AG04450 (cell line): ENCODE measurements at regions of chr7 and their contacts with region 1.

Region 1: DNA sequence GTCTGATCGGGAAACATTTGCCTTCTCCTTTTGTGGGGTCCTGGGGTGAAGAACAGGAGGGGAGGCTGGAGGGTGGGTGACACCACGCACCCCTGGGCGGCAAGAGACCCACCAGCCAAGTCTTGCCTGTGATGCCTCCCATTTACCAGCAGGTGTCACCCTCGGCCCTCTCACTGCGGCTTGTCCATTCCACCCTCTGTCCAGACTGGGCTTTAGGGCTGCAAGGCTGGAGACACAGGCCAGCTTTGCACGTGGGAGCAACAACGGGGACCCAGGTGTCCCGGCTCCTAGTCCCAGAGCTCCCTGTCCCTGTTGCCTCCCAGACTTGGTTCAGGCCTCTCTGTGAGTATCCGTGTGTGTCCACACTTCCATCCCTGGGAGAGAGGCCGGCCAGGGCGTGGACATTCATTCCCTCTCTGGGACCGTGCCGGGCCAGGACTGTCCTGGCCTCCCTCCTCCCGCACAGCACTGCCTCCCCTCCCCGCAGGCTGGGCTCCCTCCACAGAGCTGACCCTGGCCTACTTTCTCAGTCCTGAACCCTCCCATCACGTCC is 36.2 kb upstream of the GTF2IRD1 start:
- DNase-seq: no peak
- H3K4me3 ChIP-seq: no peak overlapping the region
- H3K27ac ChIP-seq: no peak overlapping the region
- H3K27me3 ChIP-seq: no peaks in the 10 kb centered on the region
- CTCF ChIP-seq: peak; percentile 98

Region 2: DNA sequence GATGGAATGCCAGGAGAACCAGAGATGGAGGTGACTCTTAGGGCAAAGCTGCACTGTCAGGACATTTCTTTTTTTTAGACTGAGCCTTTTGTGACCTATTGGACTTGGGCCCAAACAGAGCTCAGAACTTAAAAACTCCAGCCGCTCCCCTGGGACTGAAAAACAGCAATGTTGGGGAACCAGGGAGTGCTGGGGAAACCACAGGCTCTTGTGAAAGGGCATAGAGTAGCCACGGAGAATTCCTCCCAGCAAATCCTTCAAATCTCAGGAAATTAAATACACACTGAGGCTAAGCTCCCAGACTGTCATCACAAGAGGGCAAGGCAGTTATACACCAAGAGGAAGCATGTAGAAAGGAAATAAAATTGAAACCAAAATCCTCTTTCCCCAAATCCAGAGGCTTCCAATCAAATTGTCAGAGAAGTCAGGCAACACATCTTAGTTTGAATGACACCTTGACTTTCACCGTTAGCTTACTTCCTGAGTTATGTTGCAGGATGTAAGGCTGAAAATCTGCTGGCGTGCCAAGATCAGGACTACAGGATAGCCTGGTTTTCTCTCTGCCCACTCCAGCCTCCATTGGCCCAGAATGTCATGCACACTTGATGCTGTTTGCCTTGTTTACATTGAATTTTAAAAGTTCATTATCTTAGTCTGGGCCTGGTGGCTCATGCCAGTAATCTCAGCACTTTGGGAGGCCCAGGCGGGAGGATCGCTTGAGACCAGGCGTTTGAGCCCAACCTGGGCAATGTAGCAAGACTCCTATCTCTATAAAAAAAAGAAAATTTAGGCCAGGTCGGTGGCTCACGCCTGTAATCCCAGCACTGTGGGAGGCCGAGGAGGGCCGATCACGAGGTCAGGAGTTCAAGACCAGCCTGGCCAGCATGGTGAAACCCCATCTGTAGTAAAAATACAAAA is 160.7 kb before region 1 on chr7:
- CTCF ChIA-PET with region 1: no interaction called
- POLR2A ChIA-PET with region 1: no interaction called
- DNase-seq: no peak
- H3K4me3 ChIP-seq: no peak overlapping the region
- H3K27ac ChIP-seq: peak overlapping the region; percentile 21
- H3K27me3 ChIP-seq: no peaks in the 10 kb centered on the region
- CTCF ChIP-seq: no peak

Region 3: DNA sequence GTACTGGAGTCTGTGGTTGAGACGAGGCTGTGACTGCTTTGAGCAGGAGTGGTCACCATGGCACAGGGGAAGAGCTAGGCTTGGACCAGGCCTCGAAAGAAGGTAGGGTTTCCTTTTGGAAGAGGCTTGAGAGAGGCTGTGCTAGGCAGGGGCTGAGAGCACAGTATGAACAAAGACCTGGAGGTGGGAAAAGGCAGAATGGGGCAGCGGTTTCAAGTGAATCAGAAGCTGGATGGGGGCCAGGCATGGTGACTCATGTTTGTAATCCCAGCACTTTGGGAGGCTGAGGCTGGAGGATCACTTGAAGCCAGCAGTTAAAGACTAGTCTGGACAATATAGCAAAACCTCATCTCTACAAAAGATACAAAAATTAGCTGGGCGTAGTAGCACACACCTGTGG is 62.4 kb before region 1 on chr7:
- CTCF ChIA-PET with region 1: no interaction called
- POLR2A ChIA-PET with region 1: no interaction called
- DNase-seq: peak; percentile 49
- H3K4me3 ChIP-seq: no peak overlapping the region
- H3K27ac ChIP-seq: peak overlapping the region; percentile 21
- H3K27me3 ChIP-seq: no peaks in the 10 kb centered on the region
- CTCF ChIP-seq: no peak

Region 4: GRCh38 chr7:74376256-74377036 is 41.0 kb before region 1 on chr7:
- CTCF ChIA-PET with region 1: no interaction called
- POLR2A ChIA-PET with region 1: no interaction called
- DNase-seq: no peak
- H3K4me3 ChIP-seq: no peak overlapping the region
- H3K27ac ChIP-seq: no peak overlapping the region
- H3K27me3 ChIP-seq: no peaks in the 10 kb centered on the region
- CTCF ChIP-seq: no peak

Region 5: DNA sequence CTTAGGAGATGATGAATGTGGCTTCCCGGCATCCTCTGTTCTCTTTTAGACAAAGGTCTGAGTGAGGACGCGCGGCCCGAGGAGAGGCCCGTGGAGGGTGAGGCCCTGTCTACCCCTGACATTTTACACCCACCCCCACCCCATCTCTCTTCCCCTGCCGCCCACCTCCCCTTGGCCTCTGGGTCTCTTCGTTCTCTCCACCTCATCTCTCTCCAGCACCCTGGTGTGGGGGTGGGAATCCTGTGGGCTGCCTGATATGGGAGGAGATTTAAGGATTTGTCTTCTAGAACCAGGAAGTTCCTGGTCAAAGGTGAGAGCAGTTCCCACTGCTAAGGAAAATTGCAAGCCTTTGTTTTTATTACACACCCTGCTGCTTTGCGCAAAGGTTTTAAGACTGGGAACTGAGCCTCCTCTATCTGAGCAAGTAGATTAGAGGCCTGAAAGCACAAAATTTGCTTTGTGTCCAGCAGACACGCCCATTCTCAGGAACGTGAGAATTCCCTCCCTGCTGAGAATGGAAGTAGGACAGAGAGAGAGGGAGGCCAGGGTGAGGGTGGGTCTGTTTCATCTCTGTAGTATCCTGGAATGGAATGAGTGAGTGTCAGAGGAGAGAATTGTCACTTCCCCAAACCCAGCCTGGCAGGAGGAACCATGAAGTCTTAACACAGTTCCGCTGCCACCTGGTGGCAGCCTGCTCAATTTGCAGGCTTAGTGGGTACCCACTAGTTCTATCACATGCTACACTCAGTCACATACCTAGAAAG is 127.4 kb after region 1 on chr7:
- CTCF ChIA-PET with region 1: interaction called, 14 read pairs
- POLR2A ChIA-PET with region 1: no interaction called
- DNase-seq: peak; percentile 18
- H3K4me3 ChIP-seq: no peak overlapping the region
- H3K27ac ChIP-seq: peak overlapping the region; percentile 31
- H3K27me3 ChIP-seq: no peaks in the 10 kb centered on the region
- CTCF ChIP-seq: peak; percentile 58

Region 6: DNA sequence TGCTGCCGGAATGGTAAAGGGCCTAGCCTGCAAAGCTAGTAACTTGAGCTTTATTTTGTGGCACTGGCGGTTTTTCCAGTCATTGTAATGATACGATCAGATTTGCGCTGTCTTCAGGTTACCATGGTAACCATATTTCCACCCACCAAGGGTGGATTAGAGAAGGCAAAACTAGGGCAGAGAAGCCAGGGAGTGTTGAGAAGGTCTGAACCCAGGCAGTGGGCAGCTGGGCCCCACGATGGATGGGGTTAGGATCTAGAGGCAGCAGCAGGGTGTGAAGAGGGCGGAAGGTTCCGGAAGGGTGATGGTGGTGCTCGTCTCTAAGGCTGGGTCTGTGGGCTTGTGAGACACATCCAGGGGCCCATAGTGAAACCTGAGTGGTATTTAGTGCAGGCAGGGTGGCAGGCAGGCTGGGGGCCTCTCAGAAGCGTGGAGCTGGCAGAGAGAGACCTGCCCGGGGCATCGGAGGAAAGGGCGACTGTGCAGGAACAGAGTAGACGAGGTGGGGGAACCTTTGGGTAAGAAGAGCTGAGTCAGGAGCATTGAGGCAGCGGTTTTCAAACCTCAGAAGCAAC is 152.1 kb after region 1 on chr7:
- CTCF ChIA-PET with region 1: interaction called, 28 read pairs
- POLR2A ChIA-PET with region 1: no interaction called
- DNase-seq: no peak
- H3K4me3 ChIP-seq: no peak overlapping the region
- H3K27ac ChIP-seq: no peak overlapping the region
- H3K27me3 ChIP-seq: no peaks in the 10 kb centered on the region
- CTCF ChIP-seq: no peak